AG04450 (cell line): ENCODE measurements at regions of chr12 and their contacts with region 1.

Region 1: DNA sequence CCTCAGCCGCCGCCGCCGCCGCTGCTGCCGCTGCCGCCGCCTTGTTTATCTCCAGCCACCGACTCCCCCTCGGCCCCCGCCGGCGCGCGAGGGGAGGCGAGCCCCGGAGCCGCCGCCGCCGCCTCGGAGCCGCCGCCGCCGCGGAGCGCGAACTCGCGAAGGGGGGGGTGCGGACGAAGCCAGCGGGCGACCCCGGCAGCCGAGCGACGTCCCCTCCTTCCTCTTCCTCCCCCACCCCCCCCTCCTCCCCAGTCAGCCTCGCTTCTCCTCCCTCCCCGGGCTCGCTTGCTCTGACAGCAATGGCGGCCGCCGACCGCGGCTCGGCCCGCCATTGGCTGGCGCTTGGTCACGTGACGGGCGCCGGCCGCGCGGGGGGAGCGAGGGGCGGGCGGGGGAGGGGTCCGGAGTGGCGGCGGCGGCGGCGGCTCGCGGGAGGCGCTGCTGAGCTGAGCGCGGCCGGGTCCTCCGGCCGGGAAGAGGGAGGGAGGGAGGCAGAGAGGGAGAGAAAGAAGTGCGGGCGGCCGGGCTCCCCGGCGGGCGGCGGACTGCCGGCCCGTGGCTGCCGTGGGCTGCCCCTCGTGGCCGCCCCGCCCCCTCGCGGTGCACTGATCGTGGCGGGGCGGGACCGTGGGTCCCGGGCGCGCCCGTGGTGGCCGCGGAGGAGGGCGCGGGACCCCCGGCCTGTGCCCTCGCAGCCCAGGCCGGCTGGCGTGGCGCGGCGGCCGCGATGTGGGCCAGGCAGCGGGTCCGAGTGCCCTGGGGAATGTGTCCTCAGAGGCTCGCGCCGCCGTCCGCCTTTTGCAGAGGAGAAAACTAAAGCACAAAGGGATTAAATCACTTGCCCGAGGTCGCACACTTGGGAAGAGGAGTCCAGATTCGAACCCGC is at the start of gene MED13L:
- DNase-seq: peak; percentile 51
- H3K4me3 ChIP-seq: peak within 1 kb of the TSS; percentile 93
- H3K27ac ChIP-seq: peak within 1 kb of the TSS; percentile 47
- H3K27me3 ChIP-seq: no peaks in the 10 kb centered on the region
- CTCF ChIP-seq: no peak
- polyA plus RNA-seq, gene MED13L: 45.0 and 56.2 TPM in 2 replicates

Region 2: DNA sequence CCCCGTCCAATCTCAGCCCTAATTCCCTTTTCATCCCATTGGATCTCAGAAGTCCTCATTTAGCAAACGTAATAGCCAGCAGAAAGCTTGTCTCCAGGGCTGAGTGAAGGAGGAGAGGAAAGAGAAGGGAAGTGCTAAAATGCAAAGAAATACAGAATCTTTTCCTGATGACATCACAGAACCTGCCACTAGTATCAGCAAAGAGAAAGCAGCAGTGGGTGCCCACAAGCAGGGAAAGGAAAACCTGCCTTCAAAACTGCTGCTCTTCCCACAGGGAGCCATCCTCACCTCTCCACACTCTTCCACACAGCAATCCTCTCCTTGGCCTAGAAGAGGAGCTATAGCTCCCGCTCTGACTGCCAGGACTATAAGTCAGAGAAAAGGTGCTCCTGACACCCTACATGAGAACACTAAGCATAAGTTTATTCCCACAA is 11.5 kb before region 1 on chr12:
- CTCF ChIA-PET with region 1: no interaction called
- POLR2A ChIA-PET with region 1: no interaction called
- DNase-seq: no peak
- H3K4me3 ChIP-seq: no peak overlapping the region
- H3K27ac ChIP-seq: no peak overlapping the region
- H3K27me3 ChIP-seq: no peaks in the 10 kb centered on the region
- CTCF ChIP-seq: 0 out of 2 replicates have a peak, but pooled peaks have one; percentile 14

Region 3: GRCh38 chr12:116376354-116377193 is 98.9 kb after region 1 on chr12:
- CTCF ChIA-PET with region 1: no interaction called
- POLR2A ChIA-PET with region 1: interaction called, 21 read pairs
- DNase-seq: no peak
- H3K4me3 ChIP-seq: no peak overlapping the region
- H3K27ac ChIP-seq: peak overlapping the region; percentile 65
- H3K27me3 ChIP-seq: no peaks in the 10 kb centered on the region
- CTCF ChIP-seq: no peak

Region 4: DNA sequence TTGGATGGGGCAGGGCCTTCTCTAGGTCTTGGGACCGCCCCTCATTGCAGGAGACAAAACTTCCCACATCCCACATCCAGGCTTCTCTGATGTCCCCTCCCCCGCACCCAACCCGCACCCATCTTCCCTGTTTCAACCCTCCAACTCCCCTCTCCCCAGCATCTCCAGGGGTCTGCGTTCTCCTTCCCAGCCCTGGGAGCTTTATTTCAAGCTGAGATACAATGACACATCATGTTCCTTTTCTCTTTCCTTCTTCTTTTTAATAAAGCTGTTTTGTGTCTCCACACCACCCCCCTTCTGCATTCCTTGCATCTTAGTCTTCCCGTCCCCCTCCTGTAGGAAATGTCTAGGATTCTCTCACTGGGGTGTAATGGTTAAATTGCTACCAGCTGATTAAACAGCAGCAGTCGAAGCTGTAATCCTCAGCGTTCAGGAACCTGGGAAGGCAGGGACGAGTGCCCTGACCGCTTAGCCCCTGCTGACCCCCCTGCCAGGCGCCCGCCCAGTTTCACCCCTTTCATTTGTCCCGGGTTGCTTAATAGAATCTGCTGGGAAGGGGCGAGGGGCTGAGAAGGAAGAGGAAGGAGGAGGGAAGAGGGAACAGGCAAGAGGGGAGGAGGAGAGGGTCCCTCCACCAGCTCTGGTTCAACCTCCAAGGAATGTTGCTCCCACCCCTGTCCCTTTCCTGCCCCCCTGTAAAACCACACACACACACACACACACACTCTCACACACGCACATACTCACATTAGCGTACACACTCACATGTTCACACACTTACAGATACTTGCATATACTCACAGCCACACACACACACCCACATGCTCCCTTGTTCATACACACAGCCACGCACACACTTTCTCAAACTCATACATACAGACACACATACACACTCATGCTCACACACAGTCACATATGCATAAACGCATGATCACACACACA is 104.4 kb after region 1 on chr12:
- CTCF ChIA-PET with region 1: no interaction called
- POLR2A ChIA-PET with region 1: interaction called, 21 read pairs
- DNase-seq: peak; percentile 95
- H3K4me3 ChIP-seq: peak overlapping the region; percentile 43
- H3K27ac ChIP-seq: peak overlapping the region; percentile 100
- H3K27me3 ChIP-seq: no peaks in the 10 kb centered on the region
- CTCF ChIP-seq: no peak

Region 5: GRCh38 chr12:116599285-116600136 is 321.9 kb after region 1 on chr12:
- CTCF ChIA-PET with region 1: interaction called, 13 read pairs
- POLR2A ChIA-PET with region 1: no interaction called
- DNase-seq: peak; percentile 20
- H3K4me3 ChIP-seq: peak overlapping the region; percentile 44
- H3K27ac ChIP-seq: peak overlapping the region; percentile 52
- H3K27me3 ChIP-seq: no peaks in the 10 kb centered on the region
- CTCF ChIP-seq: peak; percentile 66